Kidney (tissue), 22 donors: ENCODE measurements at regions of chr9 and their contacts with region 1.

Region 1: GRCh38 chr9:130770679-130771442 is 64.2 kb upstream of the ABL1 start:
- DNase-seq: peak in 3 of 5 donors; percentile 26 to 86 (median 80)
- H3K4me3 ChIP-seq: no peak overlapping the region
- H3K27ac ChIP-seq: no peak overlapping the region
- H3K4me1 ChIP-seq: peaks cover 0 to 21% (median 17%) of the 10 kb centered on the region in 3 donors
- H3K27me3 ChIP-seq: no peaks in the 10 kb centered on the region
- CTCF ChIP-seq: peak; percentile 49

Region 2: DNA sequence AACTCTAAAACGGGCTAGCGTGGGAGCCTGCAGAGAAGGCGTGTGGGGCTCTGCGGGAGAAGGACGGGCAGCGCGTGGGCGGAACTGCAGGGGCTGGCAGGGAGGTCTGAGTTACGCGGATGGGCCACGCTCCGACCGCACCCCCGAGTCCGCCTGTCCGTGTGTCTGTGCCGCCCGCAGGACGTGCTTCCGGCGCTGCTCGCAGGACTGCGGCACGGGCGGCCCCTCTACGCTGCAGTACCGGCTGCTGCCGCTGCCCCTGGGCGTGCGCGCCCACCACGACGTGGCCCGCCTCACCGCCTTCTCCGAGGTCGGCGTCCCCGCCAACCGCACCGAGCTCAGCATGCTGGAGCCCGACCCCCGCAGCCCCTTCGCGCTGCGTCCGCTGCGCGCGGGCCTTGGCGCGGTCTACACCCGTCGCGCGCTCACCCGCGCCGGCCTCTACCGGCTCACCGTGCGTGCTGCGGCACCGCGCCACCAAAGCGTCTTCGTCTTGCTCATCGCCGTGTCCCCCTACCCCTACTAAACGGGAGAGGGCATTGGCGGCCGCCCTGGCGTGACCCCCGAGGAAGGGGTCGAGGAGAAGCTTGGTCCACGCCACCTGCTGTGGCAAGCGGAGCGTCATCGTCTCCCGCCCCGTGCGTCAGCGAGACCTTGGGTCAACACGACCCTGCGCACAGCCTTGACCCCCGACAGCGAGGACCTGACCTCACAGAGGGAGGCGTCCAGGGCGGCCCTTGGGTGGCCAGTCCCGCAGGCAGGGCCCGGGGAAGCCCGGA is 337.5 kb before region 1 on chr9:
- intact Hi-C with region 1: no loop called
- DNase-seq: peak in 4 of 5 donors; percentile 72 to 81 (median 74)
- H3K4me3 ChIP-seq: peak overlapping the region in 1 of 3 donors; percentile 39
- H3K27ac ChIP-seq: no peak overlapping the region
- H3K4me1 ChIP-seq: peaks cover 0 to 10% (median 0%) of the 10 kb centered on the region in 3 donors
- H3K27me3 ChIP-seq: no peaks in the 10 kb centered on the region
- CTCF ChIP-seq: peak; percentile 64

Region 3: GRCh38 chr9:130866474-130866965 is 95.7 kb after region 1 on chr9:
- intact Hi-C with region 1: loop called (anchors 10 kb)
- DNase-seq: peak in 4 of 5 donors; percentile 86 to 95 (median 89)
- H3K4me3 ChIP-seq: no peak overlapping the region
- H3K27ac ChIP-seq: no peak overlapping the region
- H3K4me1 ChIP-seq: peaks cover 1 to 12% (median 2%) of the 10 kb centered on the region in 3 donors
- H3K27me3 ChIP-seq: no peaks in the 10 kb centered on the region
- CTCF ChIP-seq: peak; percentile 75